ENCODE measurements at regions of chr7 and their contacts with region 1.

Region 1: GRCh38 chr7:127708788-127709187 is 56.8 kb downstream of the SND1 start:
- DNase-seq: peak; percentile 46 to 54
- H3K4me3 ChIP-seq: no peak overlapping the region
- H3K27ac ChIP-seq: no peak overlapping the region
- H3K4me1 ChIP-seq: no peaks in the 10 kb centered on the region
- H3K27me3 ChIP-seq: no peaks in the 10 kb centered on the region
- CTCF ChIP-seq: peak; percentile 82

Region 2: DNA sequence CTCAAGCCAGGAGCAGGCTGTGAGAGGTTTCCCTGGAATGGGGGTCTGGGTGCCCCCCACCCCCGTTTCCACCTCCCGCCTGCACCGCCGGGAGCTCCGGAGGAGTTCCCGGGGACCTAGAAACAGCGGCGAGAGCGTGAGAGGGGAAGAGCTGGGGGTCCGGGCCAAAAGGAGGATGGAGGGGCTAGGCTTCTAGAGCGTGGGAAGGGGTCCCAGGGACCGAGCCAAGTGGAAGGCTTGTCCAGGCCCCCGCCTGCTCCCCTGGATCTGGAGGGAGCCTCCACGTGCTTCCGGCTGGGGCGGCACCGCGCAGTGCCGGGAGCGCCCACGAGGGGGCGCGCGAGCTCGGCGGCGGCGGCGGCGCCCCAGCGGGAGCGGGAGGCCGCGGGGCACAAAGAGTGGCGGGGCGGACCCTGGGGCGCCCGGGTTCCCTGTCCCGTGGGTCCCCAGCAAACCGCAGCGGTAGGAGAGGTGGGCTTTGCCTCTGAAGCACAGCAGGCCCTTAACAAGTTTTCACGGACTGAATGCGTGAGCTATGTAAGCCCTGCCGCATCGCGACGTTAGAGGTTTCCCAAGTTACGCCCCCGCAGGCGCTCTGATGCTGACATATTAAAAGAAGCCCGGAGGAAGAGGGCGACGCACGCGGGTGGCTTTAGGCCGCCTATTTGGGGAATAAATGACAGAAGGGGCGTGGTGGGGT is 426.9 kb after region 1 on chr7:
- CTCF ChIA-PET with region 1: no interaction called
- POLR2A ChIA-PET with region 1: no interaction called
- intact Hi-C with region 1: loop called (anchors 5 kb)
- DNase-seq: peak in 1 of 2 experiments; percentile 72
- H3K4me3 ChIP-seq: peak overlapping the region; percentile 82
- H3K27ac ChIP-seq: no peak overlapping the region
- H3K4me1 ChIP-seq: no peaks in the 10 kb centered on the region
- H3K27me3 ChIP-seq: 0 out of 2 replicates have a peak, but pooled peaks cover 9% of the 10 kb centered on the region
- CTCF ChIP-seq: peak; percentile 64

Region 3: GRCh38 chr7:128322040-128322643 is 613.4 kb after region 1 on chr7:
- CTCF ChIA-PET with region 1: interaction called, 3 read pairs
- POLR2A ChIA-PET with region 1: no interaction called
- intact Hi-C with region 1: loop called (anchors 1 kb)
- DNase-seq: peak; percentile 14 to 43
- H3K4me3 ChIP-seq: no peak overlapping the region
- H3K27ac ChIP-seq: no peak overlapping the region
- H3K4me1 ChIP-seq: no peaks in the 10 kb centered on the region
- H3K27me3 ChIP-seq: no peaks in the 10 kb centered on the region
- CTCF ChIP-seq: peak; percentile 66